ENCODE measurements at regions of chr11 and their contacts with region 1.

Region 1: GRCh38 chr11:128776424-128777284 is 82.8 kb downstream of the FLI1 start:
- DNase-seq: peak in 1 of 2 donors; percentile 80
- H3K4me3 ChIP-seq: no peak overlapping the region
- CTCF ChIP-seq: no peak
- POLR2A ChIP-seq: no peak

Region 2: DNA sequence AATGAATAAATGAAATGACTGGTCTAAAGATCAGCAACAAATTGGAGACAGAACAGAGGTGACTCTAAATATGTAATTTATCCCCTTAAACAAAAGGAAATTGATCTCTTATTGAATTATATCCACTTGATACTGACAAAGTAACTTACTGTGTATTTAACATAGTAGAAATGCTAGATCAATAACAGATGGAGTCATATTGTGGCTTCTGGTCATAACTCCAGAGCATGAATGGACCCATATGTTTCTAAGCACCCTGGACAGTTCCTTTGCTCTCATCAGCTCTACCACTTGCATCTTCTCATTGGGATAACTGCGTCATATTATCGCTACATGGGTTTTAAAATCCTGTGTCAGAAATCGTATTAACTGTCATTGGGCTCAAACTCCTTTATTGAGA is 411.6 kb before region 1 on chr11:
- intact Hi-C with region 1: no loop called
- DNase-seq: no peak
- H3K4me3 ChIP-seq: no peak overlapping the region
- CTCF ChIP-seq: no peak
- POLR2A ChIP-seq: no peak

Region 3: GRCh38 chr11:128686745-128687177 is 89.9 kb before region 1 on chr11:
- intact Hi-C with region 1: loop called (anchors 5 kb)
- DNase-seq: peak in 1 of 2 donors; percentile 89
- H3K4me3 ChIP-seq: no peak overlapping the region
- CTCF ChIP-seq: no peak
- POLR2A ChIP-seq: no peak

Region 4: DNA sequence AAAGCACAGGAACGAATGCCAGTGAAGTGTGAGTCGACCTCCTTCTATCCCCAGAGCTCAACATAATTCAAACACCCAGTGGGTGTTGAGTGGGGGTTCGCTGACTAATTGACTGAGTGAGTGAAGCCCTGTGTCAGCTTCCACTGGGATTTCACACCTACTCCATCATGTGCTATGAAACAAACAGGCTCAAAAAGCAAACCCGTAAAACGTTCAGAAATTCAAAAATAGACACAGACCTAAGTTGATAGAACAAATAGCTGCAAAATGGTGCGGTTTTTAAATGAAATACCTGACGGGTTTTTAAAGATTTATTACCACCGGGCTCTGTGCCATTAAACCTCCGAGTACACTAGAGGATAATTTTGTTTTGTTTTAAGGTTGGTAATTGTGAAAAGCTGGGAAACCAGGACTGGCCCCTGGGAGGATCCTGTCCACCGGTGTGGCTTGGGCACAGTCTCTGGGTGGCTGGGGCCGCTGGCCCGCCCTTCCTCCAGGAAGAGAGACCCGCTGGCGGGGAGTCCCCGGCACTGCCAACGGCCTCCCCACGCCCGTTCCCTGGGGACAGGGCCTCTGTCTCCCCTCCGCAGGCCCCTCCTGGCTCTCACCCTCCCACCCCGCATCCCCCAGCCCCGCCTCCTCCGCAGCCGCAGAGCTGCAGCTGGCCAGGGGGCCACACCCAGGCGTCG is 128.1 kb after region 1 on chr11:
- intact Hi-C with region 1: no loop called
- DNase-seq: no peak
- H3K4me3 ChIP-seq: peak overlapping the region; percentile 38
- CTCF ChIP-seq: no peak
- POLR2A ChIP-seq: no peak